ENCODE measurements at regions of chr10 and their contacts with region 1.

Region 1: GRCh38 chr10:29998142-29998808 is 61.1 kb downstream of the JCAD start:
- DNase-seq: peak; percentile 73 to 87
- ATAC-seq: peak; percentile 72
- H3K4me3 ChIP-seq: no peak overlapping the region
- H3K27ac ChIP-seq: no peak overlapping the region
- H3K4me1 ChIP-seq: peaks cover 0 to 4% of the 10 kb centered on the region in 2 donors
- H3K27me3 ChIP-seq: no peaks in the 10 kb centered on the region

Region 2: DNA sequence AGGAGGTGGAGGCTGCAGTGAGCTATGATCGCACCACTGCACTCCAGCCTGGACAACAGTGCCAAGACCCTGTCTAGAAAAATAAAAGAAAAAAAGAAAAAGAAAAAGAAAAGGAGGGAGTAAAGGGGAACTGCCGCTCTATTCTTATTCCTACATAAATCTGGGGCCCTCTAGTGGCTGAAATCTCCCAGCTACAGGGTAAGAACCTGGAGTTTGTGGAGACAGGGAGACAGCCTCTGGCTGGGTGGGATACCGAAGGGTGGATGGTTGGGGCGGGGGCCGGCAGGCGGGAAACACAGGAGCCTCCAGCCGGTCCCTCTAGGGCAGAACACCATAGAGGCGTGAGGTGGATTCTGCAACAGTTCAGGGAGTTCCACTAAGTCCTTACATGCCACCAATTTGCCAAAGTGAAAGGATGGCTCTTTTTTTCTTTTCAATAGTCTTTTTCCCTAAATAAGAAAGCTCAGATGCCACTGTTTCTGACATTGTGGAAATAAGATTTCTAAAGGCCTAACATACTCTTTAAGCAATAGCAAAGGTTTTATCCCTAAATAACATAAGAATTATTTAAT is 480.8 kb before region 1 on chr10:
- intact Hi-C with region 1: loop called in 1 of 2 experiments (anchors 10 kb)
- DNase-seq: no peak
- ATAC-seq: no peak
- H3K4me3 ChIP-seq: no peak overlapping the region
- H3K27ac ChIP-seq: no peak overlapping the region
- H3K4me1 ChIP-seq: peaks cover 0 to 2% of the 10 kb centered on the region in 2 donors
- H3K27me3 ChIP-seq: no peaks in the 10 kb centered on the region

Region 3: DNA sequence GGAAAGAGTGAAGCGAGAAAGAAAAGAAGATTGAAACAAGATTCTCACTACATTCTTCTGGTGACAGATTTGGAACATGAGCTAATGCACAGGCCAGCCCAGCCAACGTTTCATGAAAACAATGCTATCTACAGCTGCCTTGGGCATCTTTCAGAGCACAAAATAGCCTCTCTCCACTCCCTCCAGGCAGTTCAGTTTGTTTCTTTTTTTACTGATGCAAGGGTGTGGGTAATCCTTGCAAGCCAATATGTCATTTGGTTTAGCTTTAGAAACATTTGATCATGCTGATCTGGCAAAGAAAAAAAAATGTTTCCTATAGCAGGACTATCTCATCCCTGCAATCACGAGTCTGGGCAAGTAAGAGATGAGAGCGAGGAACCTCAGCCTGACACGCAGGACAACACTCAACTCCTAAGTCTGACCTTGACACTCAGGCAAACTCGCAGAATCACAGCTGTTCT is 399.4 kb before region 1 on chr10:
- intact Hi-C with region 1: loop called in 1 of 2 experiments (anchors 10 kb)
- DNase-seq: no peak
- ATAC-seq: peak; percentile 78
- H3K4me3 ChIP-seq: no peak overlapping the region
- H3K27ac ChIP-seq: peak overlapping the region in 1 of 2 donors; percentile 87
- H3K4me1 ChIP-seq: peaks cover 6 to 12% of the 10 kb centered on the region in 2 donors
- H3K27me3 ChIP-seq: no peaks in the 10 kb centered on the region

Region 4: DNA sequence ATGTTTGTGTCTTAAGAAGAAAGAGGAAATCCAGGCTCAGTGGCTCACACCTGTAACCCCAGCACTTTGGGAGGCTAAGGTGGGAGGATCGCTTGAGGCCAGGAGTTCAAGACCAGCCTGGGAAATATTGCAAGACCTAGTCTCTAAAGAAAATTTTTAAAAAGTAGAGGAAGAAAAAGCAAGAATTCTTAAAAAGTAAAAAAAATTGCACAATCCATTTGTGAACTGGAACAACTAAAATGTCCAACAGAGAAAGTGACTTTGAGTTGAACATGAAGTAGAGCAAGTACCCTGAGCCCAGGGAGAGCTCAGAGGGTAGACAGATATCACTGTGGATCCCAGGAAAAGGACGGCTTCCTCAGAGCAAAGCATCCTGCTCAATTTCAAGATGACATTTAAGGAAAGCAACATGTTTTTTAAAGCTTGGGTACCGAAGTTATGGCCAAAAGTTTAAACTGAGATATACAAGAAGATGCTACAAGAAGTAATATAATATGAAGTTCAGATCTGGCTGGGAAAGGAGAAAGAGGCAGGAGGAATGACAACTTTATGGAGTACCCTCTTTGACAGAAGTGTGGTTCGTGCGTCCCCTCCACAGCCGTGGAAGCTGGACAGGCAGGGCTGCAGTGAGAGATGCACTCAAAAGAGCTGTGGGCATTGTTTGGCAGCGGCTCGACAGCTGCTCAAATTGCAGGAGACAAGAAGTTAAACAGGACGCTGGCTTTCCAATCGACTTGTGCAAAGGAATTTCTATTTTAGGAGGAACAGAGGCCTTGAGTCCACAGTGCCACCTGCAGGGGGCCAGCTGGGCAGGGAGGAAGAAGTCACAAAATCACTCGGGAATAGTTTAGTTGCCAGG is 140.2 kb before region 1 on chr10:
- intact Hi-C with region 1: loop called in 1 of 2 experiments (anchors 5 kb)
- DNase-seq: peak; percentile 80 to 86
- ATAC-seq: peak; percentile 81
- H3K4me3 ChIP-seq: no peak overlapping the region
- H3K27ac ChIP-seq: peak overlapping the region in 1 of 2 donors; percentile 60
- H3K4me1 ChIP-seq: peaks cover 0 to 4% of the 10 kb centered on the region in 2 donors
- H3K27me3 ChIP-seq: no peaks in the 10 kb centered on the region

Region 5: DNA sequence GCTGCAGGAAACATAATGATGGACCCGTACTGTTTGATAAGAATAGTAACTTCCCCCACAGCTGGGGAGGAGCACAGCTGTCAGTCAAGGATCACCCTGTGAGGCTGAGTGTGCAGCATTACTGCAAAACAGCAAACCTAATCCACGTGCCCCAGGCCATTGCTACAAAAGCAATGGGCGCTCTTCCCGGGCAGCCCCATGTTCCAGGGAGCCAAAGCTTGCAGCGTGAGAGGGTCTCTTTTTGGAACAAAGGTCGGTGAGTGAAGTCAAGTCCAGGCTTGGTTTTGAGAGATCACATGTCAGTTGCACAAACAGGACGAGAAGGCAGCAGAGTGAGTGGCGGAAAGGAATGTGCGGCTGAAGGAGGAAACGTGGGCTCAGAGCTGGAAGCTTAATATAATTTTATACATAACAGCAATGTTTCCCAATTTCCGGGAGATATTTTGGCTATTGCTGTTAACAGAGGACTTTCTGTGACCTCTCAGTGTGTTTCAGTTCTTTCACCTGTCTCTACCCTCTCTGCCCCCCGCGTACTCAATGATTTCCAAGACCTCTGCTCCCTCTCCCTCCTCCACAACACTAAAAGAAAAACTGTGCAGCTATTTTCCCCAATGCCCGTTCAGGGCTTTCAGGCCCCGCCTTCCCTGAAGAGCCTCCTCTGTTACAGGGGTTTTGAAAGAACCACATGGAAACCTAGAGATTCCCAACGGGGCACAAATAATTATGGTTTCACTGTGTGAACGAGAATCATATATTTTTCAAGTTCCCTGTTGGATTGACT is 221.9 kb after region 1 on chr10:
- intact Hi-C with region 1: loop called in 1 of 2 experiments (anchors 10 kb)
- DNase-seq: peak in 1 of 2 donors; percentile 42
- ATAC-seq: peak; percentile 46
- H3K4me3 ChIP-seq: no peak overlapping the region
- H3K27ac ChIP-seq: no peak overlapping the region
- H3K4me1 ChIP-seq: no peaks in the 10 kb centered on the region
- H3K27me3 ChIP-seq: no peaks in the 10 kb centered on the region

Region 6: DNA sequence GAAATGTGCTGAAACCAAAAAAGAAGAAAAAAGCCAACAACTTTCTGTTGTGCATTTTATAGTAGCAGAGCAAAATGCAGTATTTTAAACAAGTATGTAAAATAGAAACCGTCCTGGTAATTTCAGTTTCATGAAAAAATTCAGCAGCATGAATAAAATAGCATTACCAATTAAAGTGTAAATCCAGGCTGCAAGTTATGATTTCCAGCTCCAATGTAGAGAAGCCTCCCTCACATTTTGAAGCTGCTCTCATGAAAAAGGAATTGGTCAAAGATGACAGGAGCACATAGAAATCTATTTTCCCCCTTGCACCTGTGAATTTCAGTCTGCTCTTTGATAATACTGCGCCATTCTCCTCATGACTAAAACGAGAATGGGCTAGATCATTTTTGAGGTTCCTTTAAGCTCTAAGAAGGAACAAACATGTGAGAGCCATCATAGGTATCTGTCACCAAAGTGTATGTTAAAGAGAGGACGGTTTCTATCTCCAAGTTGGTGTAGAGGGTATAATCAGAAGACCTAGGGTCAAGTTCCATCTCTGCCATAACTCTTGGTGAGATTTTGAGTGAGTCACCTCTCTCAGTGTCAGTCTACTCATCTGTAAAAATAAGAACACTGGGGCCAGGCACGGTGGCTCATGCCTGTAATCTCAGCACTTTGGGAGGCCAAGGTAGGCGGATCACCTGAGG is 243.3 kb after region 1 on chr10:
- intact Hi-C with region 1: loop called in 1 of 2 experiments (anchors 1 kb)
- DNase-seq: no peak
- ATAC-seq: no peak
- H3K4me3 ChIP-seq: no peak overlapping the region
- H3K27ac ChIP-seq: no peak overlapping the region
- H3K4me1 ChIP-seq: no peaks in the 10 kb centered on the region
- H3K27me3 ChIP-seq: no peaks in the 10 kb centered on the region

Region 7: DNA sequence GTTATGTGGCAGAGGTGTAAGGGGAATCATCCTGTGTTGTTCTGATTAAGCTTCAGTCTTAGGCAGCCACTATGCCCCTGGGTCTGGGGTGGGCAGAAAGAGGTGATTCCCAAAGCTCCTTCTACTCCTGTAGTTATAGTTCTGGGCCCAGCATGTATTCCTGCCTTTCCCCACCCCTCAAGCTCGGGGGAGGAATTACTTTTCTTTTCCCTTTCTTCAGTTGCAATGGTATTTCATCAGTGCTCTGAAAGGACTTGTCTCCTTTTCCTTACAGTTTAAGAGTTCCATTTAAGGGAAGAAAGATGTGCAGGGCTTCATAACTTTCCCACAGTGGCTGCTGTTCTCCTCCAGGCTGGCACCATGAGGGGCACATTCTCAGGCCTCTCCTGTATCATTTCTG is 256.7 kb after region 1 on chr10:
- intact Hi-C with region 1: no loop called
- DNase-seq: no peak
- ATAC-seq: no peak
- H3K4me3 ChIP-seq: no peak overlapping the region
- H3K27ac ChIP-seq: no peak overlapping the region
- H3K4me1 ChIP-seq: no peaks in the 10 kb centered on the region
- H3K27me3 ChIP-seq: no peaks in the 10 kb centered on the region

Measured in aorta (tissue), 5 donors.